Activated CD4-positive, alpha-beta T cell treated with anti-CD3 and anti-CD28 coated beads, Interleukin-2, amount 10 ng/mL, durations not matched to agents 24 days and 14 days (primary cell): ENCODE measurements at regions of chr15 and their contacts with region 1.

Region 1: DNA sequence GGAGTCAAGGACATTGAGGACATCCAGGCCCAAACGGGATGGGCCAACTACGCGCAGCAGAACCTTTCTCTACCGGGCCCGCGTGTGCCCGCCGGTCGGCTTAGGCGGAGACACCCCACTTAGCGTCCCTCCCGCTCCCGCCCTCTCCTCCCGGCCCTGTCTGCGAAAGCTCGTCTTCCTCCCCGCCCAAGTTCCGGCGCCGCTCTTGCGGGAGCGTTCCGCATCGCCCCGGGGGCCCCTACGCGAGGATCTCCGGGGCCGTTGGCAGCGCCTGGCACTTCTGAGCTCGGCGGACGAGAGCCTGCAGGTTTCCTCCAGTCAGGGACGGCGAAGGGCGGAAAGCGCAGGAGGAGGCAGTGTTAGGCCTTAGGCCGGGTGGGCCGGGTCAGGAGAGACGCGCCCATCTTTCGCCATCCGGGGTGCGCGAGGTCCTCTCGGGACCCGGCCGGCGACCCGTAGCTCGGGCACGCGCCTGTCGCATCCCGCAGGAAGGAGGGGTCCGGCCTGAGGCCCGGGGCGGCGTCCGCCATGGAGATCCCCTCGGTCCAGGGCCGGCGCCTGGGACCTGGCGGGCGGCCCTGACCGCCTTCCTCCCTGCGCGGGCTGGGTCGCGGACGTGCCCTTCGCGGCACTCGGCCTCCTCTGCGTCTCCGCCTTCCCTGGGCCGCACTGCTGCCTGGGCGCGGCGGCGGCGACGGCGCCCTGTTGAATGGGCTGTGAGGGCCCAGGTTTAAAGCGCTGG is at the start of gene FEM1B:
- DNase-seq: peak; percentile 96
- H3K4me3 Mint-ChIP-seq: peak within 1 kb of the TSS; percentile 95
- H3K27ac Mint-ChIP-seq: peak within 1 kb of the TSS; percentile 96
- H3K4me1 Mint-ChIP-seq: peaks cover 48% of the 10 kb centered on the region
- H3K27me3 Mint-ChIP-seq: no peaks in the 10 kb centered on the region
- total RNA-seq, gene FEM1B: 46.2 and 51.6 TPM in 2 replicates

Region 2: GRCh38 chr15:67542420-67543347 is 735.1 kb before region 1 on chr15 and contains the start of gene MAP2K5:
- intact Hi-C with region 1: loop called (anchors 5 kb)
- DNase-seq: peak; percentile 97
- H3K4me3 Mint-ChIP-seq: peak within 1 kb of the TSS; percentile 94
- H3K27ac Mint-ChIP-seq: peak within 1 kb of the TSS; percentile 92
- H3K4me1 Mint-ChIP-seq: peaks cover 45% of the 10 kb centered on the region
- H3K27me3 Mint-ChIP-seq: no peaks in the 10 kb centered on the region
- total RNA-seq, gene MAP2K5: 21.0 and 25.1 TPM in 2 replicates

Region 3: GRCh38 chr15:68229386-68230156 is 48.2 kb before region 1 on chr15 and contains the start of gene CLN6:
- intact Hi-C with region 1: loop called (anchors 1 kb)
- DNase-seq: peak; percentile 94
- H3K4me3 Mint-ChIP-seq: peak within 1 kb of the TSS; percentile 91
- H3K27ac Mint-ChIP-seq: peak within 1 kb of the TSS; percentile 89
- H3K4me1 Mint-ChIP-seq: peaks cover 37% of the 10 kb centered on the region
- H3K27me3 Mint-ChIP-seq: peaks cover 7% of the 10 kb centered on the region
- total RNA-seq, gene CLN6: 99.0 and 102 TPM in 2 replicates

Region 4: GRCh38 chr15:68298882-68299381 is 21.2 kb after region 1 on chr15:
- intact Hi-C with region 1: loop called (anchors 1 kb)
- DNase-seq: peak; percentile 82
- H3K4me3 Mint-ChIP-seq: peak overlapping the region; percentile 81
- H3K27ac Mint-ChIP-seq: peak overlapping the region; percentile 78
- H3K4me1 Mint-ChIP-seq: peaks cover 20% of the 10 kb centered on the region
- H3K27me3 Mint-ChIP-seq: no peaks in the 10 kb centered on the region

Region 5: GRCh38 chr15:68389936-68390790 is 112.4 kb after region 1 on chr15:
- intact Hi-C with region 1: no loop called
- DNase-seq: peak; percentile 77
- H3K4me3 Mint-ChIP-seq: peak overlapping the region; percentile 16
- H3K27ac Mint-ChIP-seq: peak overlapping the region; percentile 52
- H3K4me1 Mint-ChIP-seq: peaks cover 16% of the 10 kb centered on the region
- H3K27me3 Mint-ChIP-seq: peaks cover 27% of the 10 kb centered on the region

Region 6: DNA sequence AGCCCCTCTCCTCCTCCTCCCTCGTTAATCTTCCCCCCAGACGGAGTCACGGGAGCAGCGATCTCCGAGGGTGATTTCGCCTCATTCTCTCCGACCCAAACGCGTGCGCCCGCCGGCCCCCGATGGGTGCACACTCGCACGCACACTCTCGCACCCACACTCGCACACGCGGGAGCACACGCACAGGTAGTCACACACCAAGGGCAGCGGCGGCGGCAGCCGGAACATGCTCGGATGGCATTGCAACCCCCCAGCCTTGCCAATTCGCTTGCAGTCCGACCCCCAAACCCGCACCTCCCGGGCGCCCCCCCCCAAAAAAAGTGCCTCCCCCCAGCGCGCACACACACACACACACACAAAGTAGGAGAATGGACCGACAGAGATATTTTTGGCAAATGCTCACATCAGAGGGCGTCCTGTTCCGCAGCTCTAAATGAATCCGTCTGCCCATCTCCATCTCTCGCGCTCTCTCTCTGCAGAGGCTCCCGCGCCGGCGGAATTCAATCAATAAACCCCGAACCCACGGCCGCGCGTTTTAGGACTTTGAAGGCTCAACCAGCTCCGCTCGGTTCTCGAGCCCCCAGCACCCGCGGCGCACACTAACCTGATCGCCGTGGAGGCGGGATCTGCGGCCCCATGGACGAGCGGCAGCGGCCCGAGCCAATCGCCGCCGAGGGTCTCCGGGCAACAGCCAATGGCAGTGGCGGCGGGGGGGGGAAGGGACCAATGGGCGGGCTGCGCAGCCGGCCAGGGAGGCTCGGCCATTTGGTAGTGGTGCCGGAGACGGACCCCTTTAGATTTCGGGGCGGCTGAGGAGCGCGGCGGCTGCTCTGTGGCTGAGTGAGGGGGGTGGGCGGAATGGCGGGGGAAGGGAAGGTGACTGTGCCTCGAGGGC is 542.8 kb after region 1 on chr15 and contains the start of gene ANP32A:
- intact Hi-C with region 1: loop called (anchors 5 kb)
- DNase-seq: peak; percentile 99
- H3K4me3 Mint-ChIP-seq: peak within 1 kb of the TSS; percentile 93
- H3K27ac Mint-ChIP-seq: peak within 1 kb of the TSS; percentile 96
- H3K4me1 Mint-ChIP-seq: peaks cover 30% of the 10 kb centered on the region
- H3K27me3 Mint-ChIP-seq: no peaks in the 10 kb centered on the region
- total RNA-seq, gene ANP32A: 280 and 302 TPM in 2 replicates